GM12878 (cell line): ENCODE measurements at regions of chr9 and their contacts with region 1.

Region 1: GRCh38 chr9:27333241-27334052 is 36.5 kb upstream of the EQTN start:
- DNase-seq: peak; percentile 40
- ATAC-seq: peak; percentile 90
- H3K4me3 ChIP-seq: no peak overlapping the region
- H3K27ac ChIP-seq: no peak overlapping the region
- H3K4me1 ChIP-seq: no peaks in the 10 kb centered on the region
- H3K27me3 ChIP-seq: no peaks in the 10 kb centered on the region
- CTCF ChIP-seq: peak; percentile 70 to 78 (median 71)
- EP300 ChIP-seq: no peak
- POLR2A ChIP-seq: no peak
- RAD21 ChIP-seq: peak; percentile 93

Region 2: DNA sequence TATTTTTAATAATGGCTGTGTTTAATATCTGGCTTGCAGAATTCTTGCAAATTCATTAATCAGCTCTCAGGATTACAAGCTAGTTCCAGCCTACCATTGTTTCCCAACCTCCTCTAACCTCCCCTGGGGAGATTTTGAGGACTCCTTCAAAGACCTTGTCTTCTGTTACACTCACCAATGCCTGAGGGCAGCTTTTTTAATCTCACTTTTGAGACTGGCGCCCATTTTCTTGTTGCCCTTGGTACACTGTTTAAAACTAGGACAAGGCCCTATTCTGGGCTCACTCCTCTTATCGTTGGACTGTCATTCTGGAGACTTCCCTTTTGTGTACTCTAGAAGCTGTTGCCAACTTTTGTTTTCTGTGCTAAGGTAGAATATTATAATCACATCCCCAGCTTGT is 22.9 kb before region 1 on chr9:
- CTCF ChIA-PET with region 1: no interaction called
- POLR2A ChIA-PET with region 1: no interaction called
- RAD21 ChIA-PET with region 1: no interaction called
- SMC1A ChIA-PET with region 1: no interaction called
- in situ Hi-C with region 1: no loop called
- intact Hi-C with region 1: no loop called
- DNase-seq: no peak
- ATAC-seq: no peak
- H3K4me3 ChIP-seq: no peak overlapping the region
- H3K27ac ChIP-seq: no peak overlapping the region
- H3K4me1 ChIP-seq: no peaks in the 10 kb centered on the region
- H3K27me3 ChIP-seq: no peaks in the 10 kb centered on the region
- CTCF ChIP-seq: no peak
- EP300 ChIP-seq: no peak
- POLR2A ChIP-seq: no peak
- RAD21 ChIP-seq: no peak

Region 3: DNA sequence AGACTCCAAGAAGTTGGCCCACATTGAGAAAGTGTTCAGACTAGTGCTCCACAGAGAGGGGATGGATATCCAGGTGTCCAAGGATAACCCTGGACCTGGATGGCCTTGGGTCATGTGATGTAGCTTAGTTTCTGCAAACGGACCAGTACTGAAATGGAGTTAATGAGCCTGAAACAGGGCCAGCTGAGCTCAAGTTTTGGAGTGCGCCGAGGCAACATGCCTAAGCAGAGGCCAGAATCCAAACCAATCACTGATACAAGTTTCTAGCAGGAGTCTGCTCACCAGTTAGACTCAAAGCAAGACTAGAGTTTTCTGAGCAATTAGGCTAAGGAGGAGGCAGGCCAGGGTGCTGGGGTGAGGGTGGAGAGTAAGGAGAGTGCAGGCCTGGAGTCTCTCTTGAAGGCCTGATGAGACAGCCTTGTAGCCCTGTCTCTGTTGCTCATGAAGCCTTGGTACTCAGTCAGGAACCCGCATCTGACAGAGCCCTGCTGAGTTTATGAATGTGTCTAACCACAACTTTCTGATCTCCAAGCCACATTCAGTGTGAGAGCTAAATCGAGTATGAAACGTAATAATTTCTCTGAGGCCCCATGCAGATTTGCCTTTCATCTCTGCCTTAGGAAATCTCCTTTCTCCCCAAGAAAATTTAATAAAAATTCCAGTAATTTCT is 32.4 kb after region 1 on chr9:
- CTCF ChIA-PET with region 1: interaction called, 13 read pairs
- POLR2A ChIA-PET with region 1: interaction called, 4 read pairs
- RAD21 ChIA-PET with region 1: interaction called, 20 read pairs
- SMC1A ChIA-PET with region 1: interaction called, 29 read pairs
- in situ Hi-C with region 1: no loop called
- intact Hi-C with region 1: no loop called
- DNase-seq: peak; percentile 74
- ATAC-seq: peak; percentile 91
- H3K4me3 ChIP-seq: peak overlapping the region; percentile 51; the same call in 1 of the 2 replicates
- H3K27ac ChIP-seq: peak overlapping the region; percentile 71
- H3K4me1 ChIP-seq: peaks cover 40% of the 10 kb centered on the region
- H3K27me3 ChIP-seq: no peaks in the 10 kb centered on the region; a peak in 1 of 4 replicates
- CTCF ChIP-seq: no peak
- EP300 ChIP-seq: 0 out of 4 replicates have a peak, but pooled peaks of 1 of the 2 experiments have one; percentile 10
- POLR2A ChIP-seq: no peak
- RAD21 ChIP-seq: no peak

Region 4: DNA sequence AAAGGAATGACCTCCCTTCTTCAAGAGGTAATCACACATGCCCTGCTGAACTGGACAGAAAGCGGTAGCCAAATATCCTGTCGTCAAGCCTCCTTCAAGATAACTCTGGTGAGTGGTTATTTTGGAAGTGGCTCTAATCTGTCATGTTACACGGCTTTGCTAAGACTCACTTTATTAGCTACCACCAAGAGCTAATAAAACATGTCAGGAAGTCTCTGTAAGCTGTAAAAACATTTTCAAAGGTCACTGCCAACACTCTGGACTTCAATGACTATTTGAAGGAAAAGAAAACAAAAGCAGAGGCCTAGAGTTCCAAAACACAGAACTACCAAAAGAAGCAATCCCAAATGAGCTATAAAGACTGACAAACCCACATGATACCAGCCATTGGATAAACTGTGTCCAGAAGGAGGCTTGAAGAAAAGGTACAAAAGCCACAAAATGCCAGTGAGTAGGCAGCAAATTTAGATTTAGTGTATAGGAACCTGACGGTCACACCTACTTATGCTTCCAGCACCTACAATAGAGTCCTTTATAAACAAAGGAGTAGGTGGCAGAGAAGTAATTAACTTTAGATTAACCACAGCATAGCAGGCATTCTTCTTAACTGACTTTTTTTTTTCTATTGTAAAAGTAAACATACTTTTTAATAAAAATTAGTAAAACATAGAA is 60.8 kb after region 1 on chr9:
- CTCF ChIA-PET with region 1: interaction called, 10 read pairs
- POLR2A ChIA-PET with region 1: no interaction called
- RAD21 ChIA-PET with region 1: interaction called, 6 read pairs
- SMC1A ChIA-PET with region 1: interaction called, 7 read pairs
- in situ Hi-C with region 1: no loop called
- intact Hi-C with region 1: no loop called
- DNase-seq: no peak
- ATAC-seq: no peak
- H3K4me3 ChIP-seq: no peak overlapping the region
- H3K27ac ChIP-seq: no peak overlapping the region
- H3K4me1 ChIP-seq: no peaks in the 10 kb centered on the region
- H3K27me3 ChIP-seq: no peaks in the 10 kb centered on the region
- CTCF ChIP-seq: no peak
- EP300 ChIP-seq: no peak
- POLR2A ChIP-seq: no peak
- RAD21 ChIP-seq: no peak

Region 5: GRCh38 chr9:27529316-27530278 is 196.2 kb after region 1 on chr9 and contains the start of gene MOB3B:
- CTCF ChIA-PET with region 1: interaction called, 116 read pairs
- POLR2A ChIA-PET with region 1: interaction called, 5 read pairs
- RAD21 ChIA-PET with region 1: interaction called, 97 read pairs
- SMC1A ChIA-PET with region 1: interaction called, 79 read pairs
- in situ Hi-C with region 1: loop called (anchors 5 kb)
- intact Hi-C with region 1: loop called (anchors 1 kb)
- DNase-seq: no peak
- ATAC-seq: peak; percentile 85
- H3K4me3 ChIP-seq: peak within 1 kb of the TSS; percentile 85
- H3K27ac ChIP-seq: peak within 1 kb of the TSS; percentile 33; the same call in 1 of the 2 replicates
- H3K4me1 ChIP-seq: no peaks in the 10 kb centered on the region; the same call in none of the 2 replicates
- H3K27me3 ChIP-seq: no peaks in the 10 kb centered on the region
- CTCF ChIP-seq: peak; percentile 83 to 89 (median 88)
- EP300 ChIP-seq: no peak
- POLR2A ChIP-seq: 0 out of 2 replicates have a peak, but pooled peaks have one; percentile 35
- RAD21 ChIP-seq: peak; percentile 82
- polyA plus RNA-seq, gene MOB3B: 0.44 to 0.85 TPM

Region 6: GRCh38 chr9:27556470-27556869 is 223.0 kb after region 1 on chr9:
- CTCF ChIA-PET with region 1: interaction called, 17 read pairs
- POLR2A ChIA-PET with region 1: no interaction called
- RAD21 ChIA-PET with region 1: interaction called, 4 read pairs
- SMC1A ChIA-PET with region 1: interaction called, 11 read pairs
- in situ Hi-C with region 1: no loop called
- intact Hi-C with region 1: no loop called
- DNase-seq: no peak
- ATAC-seq: no peak
- H3K4me3 ChIP-seq: no peak overlapping the region
- H3K27ac ChIP-seq: no peak overlapping the region
- H3K4me1 ChIP-seq: no peaks in the 10 kb centered on the region; the same call in 1 of the 2 replicates
- H3K27me3 ChIP-seq: no peaks in the 10 kb centered on the region
- CTCF ChIP-seq: no peak
- EP300 ChIP-seq: no peak
- POLR2A ChIP-seq: no peak
- RAD21 ChIP-seq: no peak

Region 7: DNA sequence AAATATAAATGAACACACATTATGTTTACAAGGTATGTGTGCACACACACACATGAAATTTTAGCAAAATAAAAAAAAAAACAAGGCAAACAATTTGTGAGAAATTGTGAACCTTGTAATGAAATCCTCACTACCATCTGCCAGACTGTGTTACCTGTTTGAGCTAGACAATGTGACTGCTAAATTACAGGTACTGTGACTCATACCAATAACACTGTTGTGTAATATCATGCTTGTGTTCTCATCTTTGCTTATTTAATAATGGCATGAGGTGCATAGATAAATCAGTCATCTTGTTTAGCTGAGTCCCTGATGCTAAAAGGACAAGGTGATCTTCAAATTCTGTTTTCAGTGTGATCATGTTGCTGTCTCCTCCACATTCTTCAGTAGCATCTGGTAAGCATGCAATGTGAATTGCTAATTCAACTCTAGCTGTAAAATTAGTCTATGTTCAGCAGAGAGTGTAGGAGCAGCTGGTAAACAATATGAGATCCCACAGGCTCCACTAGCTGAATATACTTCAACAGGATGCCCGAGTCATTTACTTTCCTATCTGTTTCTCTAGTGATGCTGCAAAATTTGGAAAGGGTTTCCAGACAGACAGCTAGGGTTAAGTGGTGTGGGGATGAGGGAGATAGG is 1206.1 kb after region 1 on chr9:
- CTCF ChIA-PET with region 1: no interaction called
- POLR2A ChIA-PET with region 1: no interaction called
- RAD21 ChIA-PET with region 1: no interaction called
- SMC1A ChIA-PET with region 1: no interaction called
- in situ Hi-C with region 1: no loop called
- intact Hi-C with region 1: no loop called
- DNase-seq: no peak
- ATAC-seq: no peak
- H3K4me3 ChIP-seq: no peak overlapping the region
- H3K27ac ChIP-seq: no peak overlapping the region
- H3K4me1 ChIP-seq: no peaks in the 10 kb centered on the region
- H3K27me3 ChIP-seq: no peaks in the 10 kb centered on the region
- CTCF ChIP-seq: no peak
- EP300 ChIP-seq: no peak
- POLR2A ChIP-seq: no peak
- RAD21 ChIP-seq: no peak